ENCODE measurements at regions of chr6 and their contacts with region 1.

Region 1: GRCh38 chr6:125899726-125900182 is 56.8 kb upstream of the HINT3 start:
- DNase-seq: peak; percentile 69 to 75
- H3K4me3 ChIP-seq: peak overlapping the region; percentile 29
- H3K4me3 Mint-ChIP-seq: peak overlapping the region; percentile 71
- H3K27ac Mint-ChIP-seq: peak overlapping the region; percentile 53
- H3K4me1 ChIP-seq: peaks cover 41% of the 10 kb centered on the region
- H3K4me1 Mint-ChIP-seq: peaks cover 26% of the 10 kb centered on the region
- H3K27me3 ChIP-seq: no peaks in the 10 kb centered on the region
- H3K27me3 Mint-ChIP-seq: no peaks in the 10 kb centered on the region
- CTCF ChIP-seq: peak; percentile 18 to 33

Region 2: GRCh38 chr6:125790358-125791150 is 109.2 kb before region 1 on chr6 and contains the start of gene NCOA7:
- CTCF ChIA-PET with region 1: interaction called, 23 read pairs
- POLR2A ChIA-PET with region 1: interaction called, 6 read pairs
- intact Hi-C with region 1: loop called (anchors 2 kb)
- DNase-seq: peak; percentile 82 to 84
- H3K4me3 ChIP-seq: peak within 1 kb of the TSS; percentile 91
- H3K4me3 Mint-ChIP-seq: peak within 1 kb of the TSS; percentile 91
- H3K27ac Mint-ChIP-seq: peak within 1 kb of the TSS; percentile 88
- H3K4me1 ChIP-seq: peaks cover 20% of the 10 kb centered on the region
- H3K4me1 Mint-ChIP-seq: peaks cover 13% of the 10 kb centered on the region
- H3K27me3 ChIP-seq: no peaks in the 10 kb centered on the region
- H3K27me3 Mint-ChIP-seq: no peaks in the 10 kb centered on the region
- CTCF ChIP-seq: no peak
- total RNA-seq, gene NCOA7: 62.0 and 67.9 TPM in 2 replicates

Region 3: DNA sequence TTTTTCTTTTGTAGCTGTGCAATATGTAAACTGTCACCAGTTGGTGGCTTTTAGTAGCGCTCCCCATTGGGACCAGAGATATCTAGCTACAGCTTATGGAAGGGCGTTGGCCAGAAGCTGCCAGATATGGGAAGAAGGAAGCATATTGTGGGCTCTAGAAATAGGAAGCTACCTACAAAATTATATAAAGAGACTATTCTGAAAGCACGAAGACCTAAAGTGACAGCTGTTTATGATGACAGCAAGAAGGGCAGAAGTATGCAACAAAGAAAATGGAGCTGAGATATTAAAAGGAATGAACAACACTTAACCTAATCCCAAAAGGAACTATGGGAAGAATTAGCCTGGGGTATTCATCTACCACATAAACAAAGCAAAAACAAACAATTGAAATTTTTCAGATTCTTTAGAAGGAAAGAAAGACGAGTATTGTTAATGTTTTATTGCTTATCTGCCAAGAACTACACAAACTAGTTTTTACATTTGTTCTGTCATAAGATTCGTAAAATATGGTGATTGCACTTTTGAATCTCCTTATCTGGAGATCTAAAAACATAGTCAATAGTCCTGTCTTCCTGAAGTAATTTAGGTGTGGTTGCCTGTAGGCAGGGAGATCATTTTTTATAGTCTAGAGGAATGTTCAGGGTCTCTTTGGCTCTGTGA is 27.4 kb before region 1 on chr6:
- CTCF ChIA-PET with region 1: interaction called, 18 read pairs
- POLR2A ChIA-PET with region 1: interaction called, 8 read pairs
- intact Hi-C with region 1: loop called (anchors 1 kb)
- DNase-seq: peak; percentile 57 to 58
- H3K4me3 ChIP-seq: no peak overlapping the region
- H3K4me3 Mint-ChIP-seq: peak overlapping the region; percentile 46
- H3K27ac Mint-ChIP-seq: peak overlapping the region; percentile 80
- H3K4me1 ChIP-seq: peaks cover 61% of the 10 kb centered on the region
- H3K4me1 Mint-ChIP-seq: peaks cover 37% of the 10 kb centered on the region
- H3K27me3 ChIP-seq: no peaks in the 10 kb centered on the region
- H3K27me3 Mint-ChIP-seq: no peaks in the 10 kb centered on the region
- CTCF ChIP-seq: no peak

Region 4: DNA sequence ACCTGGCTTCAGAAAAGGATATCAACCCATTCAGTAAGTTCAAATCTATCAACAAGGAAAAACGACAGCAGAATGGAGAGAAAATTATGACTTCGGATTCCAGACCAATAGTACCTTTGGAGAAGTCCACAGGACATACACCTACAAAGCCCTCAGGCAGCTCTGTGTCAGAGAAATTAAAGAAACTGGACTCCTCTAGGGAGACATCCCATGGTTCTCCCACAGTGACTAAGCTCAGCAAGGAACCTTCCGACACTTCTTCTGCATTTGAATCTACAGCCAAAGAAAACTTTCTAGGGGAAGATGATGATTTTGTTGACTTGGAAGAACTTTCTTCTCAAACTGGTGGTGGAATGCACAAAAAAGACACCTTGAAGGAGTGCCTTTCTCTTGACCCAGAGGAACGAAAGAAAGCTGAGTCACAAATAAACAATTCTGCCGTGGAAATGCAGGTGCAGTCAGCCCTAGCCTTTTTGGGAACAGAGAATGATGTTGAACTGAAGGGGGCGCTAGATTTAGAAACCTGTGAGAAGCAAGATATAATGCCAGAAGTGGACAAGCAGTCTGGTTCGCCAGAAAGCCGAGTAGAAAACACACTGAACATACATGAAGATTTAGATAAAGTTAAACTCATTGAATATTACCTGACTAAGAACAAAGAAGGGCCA is 10.6 kb before region 1 on chr6:
- CTCF ChIA-PET with region 1: no interaction called
- POLR2A ChIA-PET with region 1: no interaction called
- intact Hi-C with region 1: loop called (anchors 1 kb)
- DNase-seq: peak in 1 of 2 experiments; percentile 46
- H3K4me3 ChIP-seq: no peak overlapping the region
- H3K4me3 Mint-ChIP-seq: no peak overlapping the region
- H3K27ac Mint-ChIP-seq: no peak overlapping the region
- H3K4me1 ChIP-seq: peaks cover 7% of the 10 kb centered on the region; the same call in 1 of the 2 replicates
- H3K4me1 Mint-ChIP-seq: no peaks in the 10 kb centered on the region
- H3K27me3 ChIP-seq: no peaks in the 10 kb centered on the region
- H3K27me3 Mint-ChIP-seq: no peaks in the 10 kb centered on the region
- CTCF ChIP-seq: peak; percentile 37 to 42

Region 5: GRCh38 chr6:125918681-125919566 is 19.2 kb after region 1 on chr6:
- CTCF ChIA-PET with region 1: interaction called, 12 read pairs
- POLR2A ChIA-PET with region 1: interaction called, 14 read pairs
- intact Hi-C with region 1: loop called (anchors 1 kb)
- DNase-seq: peak; percentile 73
- H3K4me3 ChIP-seq: peak overlapping the region; percentile 37
- H3K4me3 Mint-ChIP-seq: peak overlapping the region; percentile 73
- H3K27ac Mint-ChIP-seq: peak overlapping the region; percentile 92
- H3K4me1 ChIP-seq: peaks cover 47% of the 10 kb centered on the region
- H3K4me1 Mint-ChIP-seq: peaks cover 59% of the 10 kb centered on the region
- H3K27me3 ChIP-seq: no peaks in the 10 kb centered on the region
- H3K27me3 Mint-ChIP-seq: no peaks in the 10 kb centered on the region
- CTCF ChIP-seq: no peak

Region 6: GRCh38 chr6:125944434-125944816 is 44.7 kb after region 1 on chr6:
- CTCF ChIA-PET with region 1: interaction called, 7 read pairs
- POLR2A ChIA-PET with region 1: interaction called, 4 read pairs
- intact Hi-C with region 1: loop called (anchors 1 kb)
- DNase-seq: peak in 1 of 2 experiments; percentile 46
- H3K4me3 ChIP-seq: no peak overlapping the region
- H3K4me3 Mint-ChIP-seq: peak overlapping the region; percentile 27
- H3K27ac Mint-ChIP-seq: no peak overlapping the region
- H3K4me1 ChIP-seq: peaks cover 98% of the 10 kb centered on the region
- H3K4me1 Mint-ChIP-seq: peaks cover 52% of the 10 kb centered on the region
- H3K27me3 ChIP-seq: no peaks in the 10 kb centered on the region
- H3K27me3 Mint-ChIP-seq: no peaks in the 10 kb centered on the region
- CTCF ChIP-seq: no peak

Region 7: DNA sequence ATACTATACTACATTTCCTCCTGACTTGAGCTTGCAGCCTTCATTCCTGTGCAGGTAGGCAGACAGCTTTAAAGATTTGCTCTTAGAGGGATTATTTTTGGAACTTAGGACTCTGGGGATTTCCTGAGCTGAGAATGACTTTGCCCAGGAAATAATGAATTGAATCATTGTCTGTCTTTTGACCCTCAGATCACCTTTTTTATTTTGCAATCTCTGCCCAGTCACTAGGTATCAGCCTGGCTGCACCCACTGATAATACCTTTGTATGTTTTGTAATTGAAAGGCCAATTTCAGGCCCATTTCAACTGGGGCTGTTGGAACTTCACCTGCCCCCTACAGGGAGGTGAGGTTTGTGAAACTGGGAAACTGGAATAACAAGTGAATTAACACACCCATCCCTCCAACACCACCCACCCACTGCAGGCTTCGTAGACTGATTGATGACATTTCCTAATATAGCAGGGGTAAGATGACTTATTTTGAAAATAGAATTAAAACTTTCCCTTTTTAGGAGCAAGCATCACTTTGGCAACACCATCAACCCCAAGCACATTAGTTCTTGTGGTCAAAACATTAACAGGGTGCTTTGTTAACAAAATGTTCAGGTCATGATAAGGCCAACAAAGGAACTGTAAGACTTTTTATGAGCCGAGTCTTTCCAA is 283.0 kb after region 1 on chr6:
- CTCF ChIA-PET with region 1: no interaction called
- POLR2A ChIA-PET with region 1: no interaction called
- intact Hi-C with region 1: no loop called
- DNase-seq: peak in 1 of 2 experiments; percentile 13
- H3K4me3 ChIP-seq: no peak overlapping the region
- H3K4me3 Mint-ChIP-seq: no peak overlapping the region
- H3K27ac Mint-ChIP-seq: no peak overlapping the region
- H3K4me1 ChIP-seq: peaks cover 11% of the 10 kb centered on the region
- H3K4me1 Mint-ChIP-seq: peaks cover 21% of the 10 kb centered on the region
- H3K27me3 ChIP-seq: no peaks in the 10 kb centered on the region
- H3K27me3 Mint-ChIP-seq: no peaks in the 10 kb centered on the region
- CTCF ChIP-seq: no peak

Measured in Caco-2 (cell line).